ENCODE measurements at regions of chr6 and their contacts with region 1.

Region 1: GRCh38 chr6:26025894-26026832 is 61.1 kb upstream of the HFE start:
- DNase-seq: peak; percentile 78
- H3K4me3 ChIP-seq: peak overlapping the region; percentile 64
- H3K27me3 ChIP-seq: no peaks in the 10 kb centered on the region
- CTCF ChIP-seq: peak; percentile 95

Region 2: DNA sequence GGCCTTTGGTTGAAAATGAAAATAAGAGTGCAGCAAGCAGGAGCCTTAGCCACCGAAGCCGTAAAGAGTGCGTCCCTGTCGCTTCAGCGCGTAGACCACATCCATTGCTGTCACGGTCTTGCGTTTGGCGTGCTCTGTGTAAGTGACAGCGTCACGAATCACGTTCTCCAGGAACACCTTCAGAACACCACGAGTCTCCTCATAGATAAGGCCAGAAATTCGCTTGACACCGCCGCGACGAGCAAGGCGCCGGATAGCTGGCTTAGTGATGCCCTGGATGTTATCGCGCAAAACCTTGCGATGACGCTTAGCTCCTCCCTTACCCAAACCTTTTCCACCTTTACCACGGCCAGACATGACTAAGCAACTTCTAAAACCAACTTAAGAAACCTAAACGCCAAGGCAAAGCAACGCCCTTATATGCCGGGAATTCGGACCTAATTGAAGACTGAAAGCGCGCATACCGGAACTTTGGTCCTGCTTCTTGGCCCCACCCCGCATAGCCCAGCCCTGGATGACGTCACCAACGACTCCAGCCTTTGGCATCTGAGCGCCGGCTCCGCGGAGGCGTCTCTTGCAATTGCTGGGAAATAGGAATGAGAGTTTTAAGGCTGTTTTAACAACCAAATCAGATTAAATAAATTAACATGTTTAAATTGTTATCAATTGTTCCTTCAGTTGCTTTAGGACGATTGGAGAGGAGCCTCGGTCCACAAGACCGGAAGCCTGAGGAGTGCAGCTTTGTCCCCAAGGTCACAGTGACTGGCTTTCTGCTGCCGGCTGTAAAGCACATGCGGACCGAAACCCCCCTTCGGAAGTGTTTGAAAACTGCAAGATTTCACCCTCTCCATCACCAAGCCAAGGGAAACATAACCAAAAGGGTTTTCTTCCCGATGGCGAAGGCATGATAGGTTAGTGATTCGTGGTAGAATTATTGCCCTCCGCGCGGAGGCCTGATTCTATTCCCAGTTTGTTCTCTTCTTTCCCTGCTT is 259.3 kb after region 1 on chr6:
- CTCF ChIA-PET with region 1: no interaction called
- POLR2A ChIA-PET with region 1: no interaction called
- DNase-seq: peak; percentile 97
- H3K4me3 ChIP-seq: peak overlapping the region; percentile 46
- H3K27me3 ChIP-seq: no peaks in the 10 kb centered on the region
- CTCF ChIP-seq: no peak

Region 3: GRCh38 chr6:27132532-27133280 is 1106.5 kb after region 1 on chr6:
- CTCF ChIA-PET with region 1: no interaction called
- POLR2A ChIA-PET with region 1: interaction called, 13 read pairs
- DNase-seq: peak; percentile 100
- H3K4me3 ChIP-seq: peak overlapping the region; percentile 59
- H3K27me3 ChIP-seq: no peaks in the 10 kb centered on the region
- CTCF ChIP-seq: no peak

Measured in BJ (cell line).